ENCODE measurements at regions of chr5 and their contacts with region 1.

Region 1: GRCh38 chr5:171907725-171908343 is 98.6 kb downstream of the FBXW11 start:
- DNase-seq: peak; percentile 69
- H3K4me3 ChIP-seq: no peak overlapping the region
- H3K27ac ChIP-seq: no peak overlapping the region
- H3K4me1 ChIP-seq: peaks cover 8% of the 10 kb centered on the region
- H3K27me3 ChIP-seq: no peaks in the 10 kb centered on the region
- CTCF ChIP-seq: peak; percentile 77

Region 2: DNA sequence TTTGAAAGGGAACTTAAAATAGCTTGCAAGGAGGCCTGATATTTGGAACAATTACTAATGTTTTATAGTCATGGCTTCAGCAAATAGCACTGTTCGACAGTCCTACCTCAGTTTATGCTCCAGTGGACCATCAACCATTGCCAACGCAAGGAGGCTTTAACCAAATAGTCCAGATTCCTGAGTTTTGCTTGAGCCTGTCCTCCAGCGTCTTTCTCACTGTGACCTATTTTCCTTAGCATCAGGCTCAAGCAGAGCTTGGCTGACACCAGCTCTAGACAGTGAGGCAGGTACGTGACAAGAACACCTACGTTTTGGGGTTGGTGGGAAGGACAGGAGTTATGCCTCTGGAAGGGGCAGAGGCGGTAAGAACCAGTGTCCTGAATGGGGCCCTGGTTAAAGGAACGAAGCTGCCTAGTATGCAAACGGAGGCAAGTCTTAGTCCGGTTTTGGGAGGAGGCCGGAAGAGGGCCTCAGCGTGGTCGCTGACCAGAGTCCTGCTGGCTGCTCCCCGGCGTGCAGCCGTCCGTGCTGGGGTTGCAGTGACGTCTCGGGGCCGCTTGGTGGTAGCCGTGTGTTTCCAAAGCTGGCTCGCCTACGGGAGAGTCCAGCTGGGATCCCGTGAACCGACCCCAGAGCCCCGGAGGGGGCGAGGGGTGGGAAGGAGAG is 489.4 kb before region 1 on chr5:
- CTCF ChIA-PET with region 1: interaction called, 5 read pairs
- POLR2A ChIA-PET with region 1: no interaction called
- intact Hi-C with region 1: loop called (anchors 1 kb)
- DNase-seq: peak; percentile 59
- H3K4me3 ChIP-seq: peak overlapping the region; percentile 46
- H3K27ac ChIP-seq: no peak overlapping the region
- H3K4me1 ChIP-seq: peaks cover 8% of the 10 kb centered on the region
- H3K27me3 ChIP-seq: peaks cover 7% of the 10 kb centered on the region
- CTCF ChIP-seq: peak; percentile 78

Region 3: GRCh38 chr5:171484460-171484899 is 423.4 kb before region 1 on chr5:
- CTCF ChIA-PET with region 1: no interaction called
- POLR2A ChIA-PET with region 1: no interaction called
- intact Hi-C with region 1: loop called (anchors 5 kb)
- DNase-seq: peak; percentile 26
- H3K4me3 ChIP-seq: no peak overlapping the region
- H3K27ac ChIP-seq: no peak overlapping the region
- H3K4me1 ChIP-seq: no peaks in the 10 kb centered on the region
- H3K27me3 ChIP-seq: no peaks in the 10 kb centered on the region
- CTCF ChIP-seq: peak; percentile 84

Region 4: DNA sequence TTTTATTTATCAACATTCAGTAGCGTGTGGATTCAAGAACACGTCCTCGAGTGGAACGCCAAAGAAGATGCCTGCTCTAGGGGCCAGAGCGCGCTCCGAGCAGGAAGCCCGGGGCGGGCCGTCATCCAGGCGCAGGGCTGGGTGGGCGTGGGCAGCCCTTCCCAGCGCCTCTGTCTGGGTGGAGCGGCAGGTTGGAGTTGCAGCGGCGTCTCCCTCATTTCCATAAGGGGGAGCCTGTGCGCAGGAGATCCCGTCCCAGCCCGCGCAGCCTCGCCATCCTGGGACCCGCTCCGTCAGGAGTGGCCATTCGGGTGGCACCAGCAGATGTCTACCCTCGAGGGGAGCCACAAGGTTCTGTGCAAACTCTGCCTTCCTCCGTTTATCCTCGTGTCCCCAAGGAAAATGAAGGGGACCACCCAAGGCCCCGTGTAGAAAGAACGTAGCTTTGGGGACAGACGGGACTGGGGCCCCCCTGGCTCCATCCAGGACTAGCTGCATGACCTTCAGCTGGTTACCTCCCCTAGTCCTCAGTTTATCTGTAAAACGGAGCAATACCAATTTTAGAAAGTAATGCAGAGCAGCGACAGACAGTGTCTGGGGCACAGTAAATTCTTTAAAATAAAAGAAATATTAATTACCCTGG is 277.7 kb before region 1 on chr5:
- CTCF ChIA-PET with region 1: no interaction called
- POLR2A ChIA-PET with region 1: no interaction called
- intact Hi-C with region 1: loop called (anchors 2 kb)
- DNase-seq: peak; percentile 64
- H3K4me3 ChIP-seq: no peak overlapping the region
- H3K27ac ChIP-seq: no peak overlapping the region
- H3K4me1 ChIP-seq: no peaks in the 10 kb centered on the region
- H3K27me3 ChIP-seq: peaks cover 6% of the 10 kb centered on the region
- CTCF ChIP-seq: peak; percentile 53

Region 5: GRCh38 chr5:171858303-171858702 is 49.5 kb before region 1 on chr5:
- CTCF ChIA-PET with region 1: no interaction called
- POLR2A ChIA-PET with region 1: no interaction called
- intact Hi-C with region 1: no loop called
- DNase-seq: peak; percentile 27
- H3K4me3 ChIP-seq: no peak overlapping the region
- H3K27ac ChIP-seq: no peak overlapping the region
- H3K4me1 ChIP-seq: no peaks in the 10 kb centered on the region
- H3K27me3 ChIP-seq: no peaks in the 10 kb centered on the region
- CTCF ChIP-seq: peak; percentile 53

Region 6: GRCh38 chr5:172035039-172035438 is 127.2 kb after region 1 on chr5:
- CTCF ChIA-PET with region 1: interaction called, 11 read pairs
- POLR2A ChIA-PET with region 1: no interaction called
- intact Hi-C with region 1: loop called (anchors 1 kb)
- DNase-seq: no peak
- H3K4me3 ChIP-seq: no peak overlapping the region
- H3K27ac ChIP-seq: no peak overlapping the region
- H3K4me1 ChIP-seq: no peaks in the 10 kb centered on the region
- H3K27me3 ChIP-seq: no peaks in the 10 kb centered on the region
- CTCF ChIP-seq: no peak

Region 7: GRCh38 chr5:172059661-172060100 is 151.8 kb after region 1 on chr5:
- CTCF ChIA-PET with region 1: interaction called, 17 read pairs
- POLR2A ChIA-PET with region 1: no interaction called
- intact Hi-C with region 1: loop called (anchors 1 kb)
- DNase-seq: peak; percentile 41
- H3K4me3 ChIP-seq: no peak overlapping the region
- H3K27ac ChIP-seq: no peak overlapping the region
- H3K4me1 ChIP-seq: no peaks in the 10 kb centered on the region
- H3K27me3 ChIP-seq: no peaks in the 10 kb centered on the region
- CTCF ChIP-seq: peak; percentile 66

Measured in A673 (cell line).